ENCODE measurements at regions of chr11 and their contacts with region 1.

Region 1: DNA sequence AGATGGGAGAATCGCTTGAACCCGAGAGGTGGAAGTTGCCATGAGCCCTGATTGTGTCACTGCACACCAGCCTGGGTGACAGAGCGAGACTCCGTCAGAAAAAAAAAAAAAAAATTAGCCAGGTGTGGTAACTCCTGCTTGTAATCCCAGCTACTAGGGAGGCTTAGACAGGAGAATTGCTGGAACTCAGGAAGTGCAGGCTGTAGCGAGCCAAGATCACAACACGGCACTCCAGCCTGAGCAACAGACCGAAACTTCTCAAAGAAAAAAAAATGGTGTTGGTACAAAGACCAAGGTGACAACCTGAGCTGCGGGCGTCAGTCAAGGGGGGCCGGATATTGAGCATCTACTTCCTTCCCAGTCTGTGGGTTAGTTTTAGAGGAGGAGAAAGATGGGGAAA is 48.4 kb upstream of the HSPA8 start:
- DNase-seq: no peak
- H3K4me3 Mint-ChIP-seq: no peak overlapping the region
- H3K27ac Mint-ChIP-seq: no peak overlapping the region
- H3K4me1 Mint-ChIP-seq: peaks cover 3% of the 10 kb centered on the region
- H3K27me3 Mint-ChIP-seq: peaks cover 22% of the 10 kb centered on the region

Region 2: DNA sequence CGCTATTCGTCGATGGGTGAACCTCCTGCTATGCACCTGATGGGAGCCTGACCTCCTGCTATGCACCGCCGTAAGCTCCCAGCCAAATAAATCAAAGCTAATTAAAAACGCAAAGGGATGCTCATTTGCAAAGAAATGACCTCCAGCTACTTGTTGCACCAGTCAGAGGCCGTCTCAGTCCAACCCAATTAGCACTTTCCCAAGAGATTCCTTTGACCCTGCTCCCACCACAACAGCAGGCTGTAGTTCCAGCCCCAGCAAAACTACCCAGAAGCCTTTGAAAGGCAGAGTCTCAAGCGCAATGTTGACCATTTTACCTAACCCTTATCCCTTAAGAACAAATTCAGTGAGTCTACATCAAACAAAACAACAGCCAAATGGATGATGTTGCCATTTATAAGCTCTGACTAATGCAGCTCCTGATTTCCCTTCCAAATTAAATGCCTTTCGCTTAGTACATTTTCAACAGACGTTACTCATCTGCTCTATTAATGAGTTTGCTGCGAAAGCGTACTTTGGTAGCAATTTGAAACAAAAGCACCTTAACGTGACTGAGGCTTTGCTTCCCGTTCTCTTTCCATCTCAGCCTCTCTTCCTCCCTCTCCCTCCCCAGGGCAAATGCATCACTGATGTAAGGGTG is 111.5 kb before region 1 on chr11:
- intact Hi-C with region 1: no loop called
- DNase-seq: no peak
- H3K4me3 Mint-ChIP-seq: no peak overlapping the region
- H3K27ac Mint-ChIP-seq: no peak overlapping the region
- H3K4me1 Mint-ChIP-seq: no peaks in the 10 kb centered on the region
- H3K27me3 Mint-ChIP-seq: peaks cover 31% of the 10 kb centered on the region

Region 3: DNA sequence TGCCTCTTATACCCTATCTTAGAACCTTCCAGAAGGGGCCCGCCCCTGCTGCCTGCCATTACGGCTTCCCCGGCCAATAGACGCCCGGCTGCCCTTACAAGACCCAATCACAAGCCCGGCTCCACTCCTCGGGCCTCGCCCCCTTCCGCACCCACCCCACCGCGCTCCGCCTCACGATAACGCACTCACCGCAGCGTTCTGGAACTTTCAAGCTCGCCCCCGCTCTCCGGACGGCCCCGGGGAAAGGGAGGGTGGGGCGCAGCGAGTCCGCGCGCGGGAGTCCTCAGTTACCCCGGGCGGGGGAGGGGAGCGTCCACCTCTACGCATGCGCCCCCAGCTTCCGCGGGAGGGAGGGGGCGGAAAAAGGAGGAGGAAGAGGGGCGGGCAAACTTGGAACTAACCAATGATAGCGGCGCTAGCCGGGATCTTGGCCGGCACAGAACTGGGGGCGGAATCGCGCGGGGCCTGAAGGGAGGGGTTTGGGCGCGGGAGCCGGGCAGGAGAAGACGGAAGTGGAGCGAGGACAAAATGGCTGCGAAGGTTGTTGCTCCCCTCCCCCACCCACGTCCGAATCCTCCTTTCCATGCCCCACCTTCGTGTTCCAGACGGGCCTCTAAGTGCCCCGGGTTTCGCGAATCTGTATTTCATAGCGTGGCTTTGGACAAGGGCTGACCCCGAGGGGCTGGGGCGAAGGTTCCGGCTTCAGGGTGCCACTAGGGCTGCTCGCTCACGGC is 48.0 kb before region 1 on chr11:
- intact Hi-C with region 1: loop called (anchors 2 kb)
- DNase-seq: peak; percentile 100
- H3K4me3 Mint-ChIP-seq: peak overlapping the region; percentile 100
- H3K27ac Mint-ChIP-seq: peak overlapping the region; percentile 99
- H3K4me1 Mint-ChIP-seq: peaks cover 46% of the 10 kb centered on the region
- H3K27me3 Mint-ChIP-seq: peaks cover 1% of the 10 kb centered on the region

Region 4: GRCh38 chr11:123246749-123247495 is 136.6 kb after region 1 on chr11:
- intact Hi-C with region 1: loop called (anchors 1 kb)
- DNase-seq: peak; percentile 94
- H3K4me3 Mint-ChIP-seq: no peak overlapping the region
- H3K27ac Mint-ChIP-seq: no peak overlapping the region
- H3K4me1 Mint-ChIP-seq: peaks cover 8% of the 10 kb centered on the region
- H3K27me3 Mint-ChIP-seq: peaks cover 31% of the 10 kb centered on the region

Region 5: GRCh38 chr11:123261345-123262106 is 151.2 kb after region 1 on chr11:
- intact Hi-C with region 1: loop called (anchors 1 kb)
- DNase-seq: peak; percentile 92
- H3K4me3 Mint-ChIP-seq: no peak overlapping the region
- H3K27ac Mint-ChIP-seq: no peak overlapping the region
- H3K4me1 Mint-ChIP-seq: peaks cover 12% of the 10 kb centered on the region
- H3K27me3 Mint-ChIP-seq: peaks cover 37% of the 10 kb centered on the region

Region 6: GRCh38 chr11:123478352-123478987 is 368.1 kb after region 1 on chr11:
- intact Hi-C with region 1: loop called (anchors 5 kb)
- DNase-seq: peak; percentile 81
- H3K4me3 Mint-ChIP-seq: peak overlapping the region; percentile 43
- H3K27ac Mint-ChIP-seq: peak overlapping the region; percentile 78
- H3K4me1 Mint-ChIP-seq: peaks cover 55% of the 10 kb centered on the region
- H3K27me3 Mint-ChIP-seq: no peaks in the 10 kb centered on the region

Region 7: DNA sequence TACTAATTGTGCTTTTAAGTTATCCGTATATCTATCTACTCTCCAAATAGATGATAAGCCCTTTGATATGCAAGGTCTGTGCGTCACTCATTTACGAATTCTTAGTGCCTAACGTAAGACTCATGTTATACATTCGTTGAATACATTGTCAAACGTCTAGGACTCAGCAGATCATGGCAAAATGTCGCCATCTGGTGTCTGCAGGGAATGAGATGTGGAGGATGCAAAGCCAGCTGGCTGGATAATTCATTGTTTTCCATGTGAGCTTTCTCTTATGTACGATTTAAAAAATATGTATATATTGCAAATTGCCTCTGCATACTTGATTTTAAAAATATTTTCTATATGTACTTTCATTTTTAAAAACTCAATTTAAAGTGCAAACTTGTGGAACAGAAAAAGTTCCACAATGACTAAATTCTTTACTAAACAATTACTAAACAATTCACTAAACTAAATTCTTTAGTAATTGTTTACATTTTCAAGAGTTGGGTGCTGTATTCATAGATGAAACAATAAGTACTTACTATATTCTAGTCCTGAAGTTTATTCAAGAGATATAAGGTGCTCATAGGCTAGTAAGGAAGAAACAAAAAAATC is 597.4 kb after region 1 on chr11:
- intact Hi-C with region 1: loop called (anchors 5 kb)
- DNase-seq: peak; percentile 89
- H3K4me3 Mint-ChIP-seq: no peak overlapping the region
- H3K27ac Mint-ChIP-seq: no peak overlapping the region
- H3K4me1 Mint-ChIP-seq: peaks cover 2% of the 10 kb centered on the region
- H3K27me3 Mint-ChIP-seq: peaks cover 10% of the 10 kb centered on the region